AG04450 (cell line): ENCODE measurements at regions of chr6 and their contacts with region 1.

Region 1: DNA sequence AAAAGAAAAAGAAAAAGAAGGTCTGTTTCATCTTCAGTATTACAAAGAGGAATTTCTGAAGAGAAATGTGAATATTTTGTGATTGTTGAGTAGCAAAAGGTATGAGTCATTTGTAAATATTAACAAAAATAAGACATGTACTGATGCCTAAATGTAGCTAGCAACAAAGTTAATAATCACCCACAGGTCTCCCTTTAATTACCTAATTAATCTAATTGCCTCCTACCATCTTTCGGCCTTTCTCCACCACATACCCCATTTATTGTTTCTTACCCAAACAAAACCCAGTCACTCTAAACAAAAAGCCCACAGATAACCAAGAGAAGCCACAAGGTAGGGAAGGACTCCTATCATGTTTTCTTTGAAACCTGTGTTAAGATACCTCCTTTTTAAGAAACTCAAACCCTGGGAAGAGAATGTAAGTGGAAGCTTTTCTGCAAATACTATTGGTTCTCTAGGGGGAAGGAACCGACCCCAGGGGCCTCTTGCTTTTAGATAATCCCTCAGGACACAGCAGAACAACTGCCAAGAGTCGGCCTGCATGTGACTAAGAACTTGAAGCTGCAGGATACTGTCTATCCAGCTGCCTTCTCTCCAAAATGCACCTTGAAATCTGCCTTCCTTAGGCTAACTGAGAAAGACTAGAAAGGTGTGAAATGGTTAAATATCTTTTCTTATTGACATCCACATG is 16.1 kb upstream of the STK38 start:
- DNase-seq: no peak
- H3K4me3 ChIP-seq: no peak overlapping the region
- H3K27ac ChIP-seq: no peak overlapping the region
- H3K27me3 ChIP-seq: no peaks in the 10 kb centered on the region
- CTCF ChIP-seq: no peak

Region 2: GRCh38 chr6:35876902-35877301 is 686.5 kb before region 1 on chr6:
- CTCF ChIA-PET with region 1: no interaction called
- POLR2A ChIA-PET with region 1: no interaction called
- DNase-seq: no peak
- H3K4me3 ChIP-seq: no peak overlapping the region
- H3K27ac ChIP-seq: no peak overlapping the region
- H3K27me3 ChIP-seq: no peaks in the 10 kb centered on the region
- CTCF ChIP-seq: no peak

Region 3: DNA sequence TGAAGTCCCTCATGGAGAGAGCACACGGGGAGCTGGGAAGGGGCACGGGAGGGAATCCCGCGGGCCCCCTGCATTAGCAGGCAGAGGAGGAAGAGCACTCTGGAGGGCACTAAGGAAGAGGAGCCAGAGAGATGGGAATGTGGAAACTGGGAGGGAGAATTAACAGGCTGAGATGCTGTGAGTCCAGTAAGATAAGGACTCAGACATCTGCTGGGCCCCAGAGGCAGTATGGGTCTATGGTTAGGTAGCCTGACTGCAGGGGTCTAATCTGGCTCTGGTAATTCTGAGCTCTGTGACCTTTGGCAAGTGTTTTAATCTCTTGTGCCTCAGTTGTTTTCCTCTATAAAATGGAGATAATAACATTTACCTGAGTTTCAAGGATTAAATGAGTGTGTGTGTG is 15.0 kb after region 1 on chr6:
- CTCF ChIA-PET with region 1: no interaction called
- POLR2A ChIA-PET with region 1: interaction called, 10 read pairs
- DNase-seq: no peak
- H3K4me3 ChIP-seq: no peak overlapping the region
- H3K27ac ChIP-seq: no peak overlapping the region
- H3K27me3 ChIP-seq: no peaks in the 10 kb centered on the region
- CTCF ChIP-seq: no peak